ENCODE measurements at regions of chr20 and their contacts with region 1.

Region 1: GRCh38 chr20:37270576-37271420 is 9.2 kb upstream of the GHRH start:
- DNase-seq: no peak
- H3K4me3 ChIP-seq: no peak overlapping the region
- H3K4me3 Mint-ChIP-seq: no peak overlapping the region
- H3K27ac ChIP-seq: no peak overlapping the region
- H3K27ac Mint-ChIP-seq: no peak overlapping the region
- H3K4me1 ChIP-seq: no peaks in the 10 kb centered on the region
- H3K4me1 Mint-ChIP-seq: no peaks in the 10 kb centered on the region
- H3K27me3 ChIP-seq: no peaks in the 10 kb centered on the region
- H3K27me3 Mint-ChIP-seq: no peaks in the 10 kb centered on the region

Region 2: GRCh38 chr20:37223053-37223452 is 47.7 kb before region 1 on chr20:
- CTCF ChIA-PET with region 1: no interaction called
- POLR2A ChIA-PET with region 1: no interaction called
- intact Hi-C with region 1: no loop called
- DNase-seq: no peak
- H3K4me3 ChIP-seq: no peak overlapping the region
- H3K4me3 Mint-ChIP-seq: no peak overlapping the region
- H3K27ac ChIP-seq: no peak overlapping the region
- H3K27ac Mint-ChIP-seq: peak overlapping the region in 1 of 7 donors; percentile 12
- H3K4me1 ChIP-seq: no peaks in the 10 kb centered on the region
- H3K4me1 Mint-ChIP-seq: peaks cover 0 to 1% (median 0%) of the 10 kb centered on the region in 4 donors
- H3K27me3 ChIP-seq: no peaks in the 10 kb centered on the region
- H3K27me3 Mint-ChIP-seq: no peaks in the 10 kb centered on the region

Region 3: GRCh38 chr20:37384683-37385174 is 113.9 kb after region 1 on chr20:
- CTCF ChIA-PET with region 1: interaction called, 26 read pairs
- POLR2A ChIA-PET with region 1: no interaction called
- intact Hi-C with region 1: loop called (anchors 1 kb)
- DNase-seq: peak; percentile 51 to 83 (median 75)
- H3K4me3 ChIP-seq: peak overlapping the region in 1 of 2 donors; percentile 45
- H3K4me3 Mint-ChIP-seq: peak overlapping the region; percentile 79 to 92 (median 88)
- H3K27ac ChIP-seq: no peak overlapping the region
- H3K27ac Mint-ChIP-seq: peak overlapping the region in 6 of 7 donors; percentile 77 to 91 (median 86)
- H3K4me1 ChIP-seq: peaks cover 4% of the 10 kb centered on the region
- H3K4me1 Mint-ChIP-seq: peaks cover 4 to 7% (median 6%) of the 10 kb centered on the region in 4 donors
- H3K27me3 ChIP-seq: no peaks in the 10 kb centered on the region
- H3K27me3 Mint-ChIP-seq: no peaks in the 10 kb centered on the region